Posterior vena cava (tissue), 2 donors: ENCODE measurements at regions of chr18 and their contacts with region 1.

Region 1: GRCh38 chr18:78268226-78268988 is 711.2 kb upstream of the SALL3 start:
- DNase-seq: no peak

Region 2: DNA sequence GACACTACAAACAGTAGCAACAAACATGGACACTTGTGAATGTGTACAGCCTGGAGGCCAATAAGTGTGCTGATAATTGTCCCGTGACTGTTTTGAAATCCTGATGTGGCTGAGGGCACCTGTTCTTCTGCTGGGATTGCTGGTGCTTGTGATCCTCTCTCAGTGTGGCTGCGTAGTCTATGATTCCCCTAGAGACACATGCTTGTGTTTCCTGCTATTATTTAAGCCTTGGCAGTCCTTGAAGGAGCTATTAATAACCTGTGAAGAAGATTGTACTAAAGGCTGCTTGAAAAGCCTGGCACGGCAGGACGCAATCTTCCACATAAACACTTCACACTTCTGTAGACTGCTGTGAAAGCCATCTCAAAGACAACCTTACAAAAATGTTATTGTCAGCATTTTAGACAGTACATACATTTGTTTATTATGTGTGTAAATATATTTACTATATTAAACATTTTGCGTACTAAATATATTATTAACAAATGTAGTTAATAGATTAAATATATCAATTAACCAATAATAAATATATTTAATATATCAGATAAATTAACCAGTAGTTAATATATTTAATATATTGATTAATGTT is 947.3 kb before region 1 on chr18:
- intact Hi-C with region 1: loop called in 1 of 2 experiments (anchors 10 kb)
- DNase-seq: no peak

Region 3: GRCh38 chr18:78323453-78324197 is 55.2 kb after region 1 on chr18:
- intact Hi-C with region 1: no loop called
- DNase-seq: no peak

Region 4: DNA sequence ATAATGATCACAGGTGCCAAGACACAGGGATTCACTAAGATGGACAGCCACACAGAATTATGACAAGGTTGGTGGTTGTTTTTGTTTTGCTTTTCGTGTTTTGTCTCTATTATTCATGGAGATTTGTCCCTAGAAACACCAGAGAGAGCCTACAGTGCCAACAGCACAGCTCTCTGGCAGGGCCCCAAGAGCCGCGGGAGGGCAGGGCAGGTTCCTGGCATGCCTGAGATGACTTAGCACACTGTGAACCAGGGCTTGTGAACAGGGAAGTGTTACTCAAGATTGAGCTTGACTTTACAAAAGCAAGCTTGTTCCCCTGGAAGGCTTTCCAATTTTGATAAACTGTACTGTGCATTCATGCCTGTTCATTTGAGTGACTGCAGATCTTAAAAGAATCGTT is 273.8 kb after region 1 on chr18:
- intact Hi-C with region 1: no loop called
- DNase-seq: peak; percentile 88

Region 5: DNA sequence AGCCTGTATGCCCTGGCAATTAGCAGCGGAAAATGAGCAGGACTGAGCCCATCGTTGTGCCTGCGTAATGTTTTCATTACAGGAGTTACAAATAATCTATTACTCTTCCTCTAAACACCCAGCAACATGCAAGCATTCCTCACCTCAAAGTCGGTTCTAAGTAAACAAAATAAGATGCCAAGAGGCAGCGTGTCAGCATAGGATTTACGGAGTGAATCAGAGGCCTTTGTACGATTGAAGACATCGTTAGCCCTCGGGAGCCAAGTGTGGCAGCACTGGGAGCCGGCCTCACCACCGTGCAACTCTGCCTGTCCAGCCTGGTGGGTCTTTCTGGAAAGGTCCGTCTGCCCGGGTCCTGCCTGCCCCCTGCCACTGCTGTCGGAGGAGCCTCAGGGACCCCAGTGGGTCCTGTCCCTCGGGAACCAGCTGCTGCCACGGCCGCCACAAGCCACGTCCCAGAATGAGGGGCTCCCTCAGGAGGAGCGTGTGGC is 1331.1 kb after region 1 on chr18:
- intact Hi-C with region 1: loop called in 1 of 2 experiments (anchors 5 kb)
- DNase-seq: peak; percentile 73